ENCODE measurements at regions of chr7 and their contacts with region 1.

Region 1: GRCh38 chr7:143901668-143902331 is at the start of gene TCAF1:
- DNase-seq: peak; percentile 79 to 97
- H3K4me3 ChIP-seq: peak within 1 kb of the TSS; percentile 70 to 78
- H3K27ac ChIP-seq: peak within 1 kb of the TSS; percentile 79 to 84
- H3K4me1 ChIP-seq: peaks cover 0 to 3% of the 10 kb centered on the region in 2 donors
- H3K27me3 ChIP-seq: no peaks in the 10 kb centered on the region
- CTCF ChIP-seq: peak in 2 of 3 experiments; percentile 40 to 43
- total RNA-seq, gene TCAF1: 30.9 TPM

Region 2: DNA sequence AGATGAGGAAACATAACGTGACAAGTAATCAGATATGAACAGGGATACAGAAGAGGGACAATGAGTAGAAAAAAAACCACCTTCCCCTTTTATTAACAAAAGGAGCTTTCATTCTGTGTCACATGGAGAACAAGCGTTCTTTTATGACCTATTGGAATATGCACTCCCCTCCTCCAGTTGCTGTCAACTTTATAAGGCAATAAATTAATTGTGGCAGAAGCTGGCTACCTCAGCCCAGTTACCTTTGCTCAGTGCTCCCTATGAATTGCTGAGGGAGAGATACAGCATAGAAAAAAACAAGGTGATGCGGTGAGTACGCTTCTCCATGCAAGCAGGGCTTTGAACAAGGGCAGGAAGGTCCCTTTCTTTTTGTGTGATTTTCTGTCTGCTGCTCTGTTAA is 1790.3 kb before region 1 on chr7 and contains the start of gene MGAM2:
- intact Hi-C with region 1: no loop called
- DNase-seq: no peak
- H3K4me3 ChIP-seq: no peak within 1 kb of the TSS
- H3K27ac ChIP-seq: no peak within 1 kb of the TSS
- H3K4me1 ChIP-seq: no peaks in the 10 kb centered on the region
- H3K27me3 ChIP-seq: no peaks in the 10 kb centered on the region
- CTCF ChIP-seq: no peak
- total RNA-seq, gene MGAM2: not detected

Region 3: DNA sequence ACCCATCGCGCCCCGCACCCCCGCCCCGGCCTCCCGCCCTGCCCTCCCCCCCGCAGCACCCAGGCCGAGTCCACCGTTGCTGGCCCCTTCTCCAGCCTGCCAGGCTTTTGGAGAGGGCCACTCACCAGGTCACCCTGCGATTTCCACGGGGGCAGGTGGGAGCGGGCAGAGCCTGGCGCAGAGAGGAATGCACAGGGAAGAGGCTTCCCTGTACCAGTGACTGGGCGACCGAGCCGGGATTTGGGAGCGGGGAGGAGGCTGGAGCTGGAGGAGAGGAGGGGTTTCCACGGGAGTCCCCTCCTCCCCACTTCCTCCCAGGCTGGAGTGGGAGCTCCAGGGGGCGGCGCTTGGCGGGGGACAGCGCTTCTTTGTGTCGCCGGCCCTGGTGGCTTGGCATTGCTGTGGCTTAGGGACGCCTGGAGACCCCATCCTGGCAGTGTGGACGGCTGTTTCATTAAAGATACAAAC is 19.2 kb before region 1 on chr7:
- intact Hi-C with region 1: loop called (anchors 1 kb)
- DNase-seq: no peak
- H3K4me3 ChIP-seq: peak overlapping the region; percentile 70 to 88
- H3K27ac ChIP-seq: peak overlapping the region; percentile 54 to 60
- H3K4me1 ChIP-seq: peaks cover 0 to 16% of the 10 kb centered on the region in 2 donors
- H3K27me3 ChIP-seq: no peaks in the 10 kb centered on the region
- CTCF ChIP-seq: no peak